Activated T-helper 2 cell treated with anti-CD3 and anti-CD28 coated beads, Interferon-gamma antibody, Interleukin-2, Interleukin-4, amounts not matched to agents 10 μg/mL and 5 μg/mL and 100 μg/mL, durations not matched to agents 14 hours and 24 hours and 36 hours (primary cell): ENCODE measurements at regions of chr6 and their contacts with region 1.

Region 1: DNA sequence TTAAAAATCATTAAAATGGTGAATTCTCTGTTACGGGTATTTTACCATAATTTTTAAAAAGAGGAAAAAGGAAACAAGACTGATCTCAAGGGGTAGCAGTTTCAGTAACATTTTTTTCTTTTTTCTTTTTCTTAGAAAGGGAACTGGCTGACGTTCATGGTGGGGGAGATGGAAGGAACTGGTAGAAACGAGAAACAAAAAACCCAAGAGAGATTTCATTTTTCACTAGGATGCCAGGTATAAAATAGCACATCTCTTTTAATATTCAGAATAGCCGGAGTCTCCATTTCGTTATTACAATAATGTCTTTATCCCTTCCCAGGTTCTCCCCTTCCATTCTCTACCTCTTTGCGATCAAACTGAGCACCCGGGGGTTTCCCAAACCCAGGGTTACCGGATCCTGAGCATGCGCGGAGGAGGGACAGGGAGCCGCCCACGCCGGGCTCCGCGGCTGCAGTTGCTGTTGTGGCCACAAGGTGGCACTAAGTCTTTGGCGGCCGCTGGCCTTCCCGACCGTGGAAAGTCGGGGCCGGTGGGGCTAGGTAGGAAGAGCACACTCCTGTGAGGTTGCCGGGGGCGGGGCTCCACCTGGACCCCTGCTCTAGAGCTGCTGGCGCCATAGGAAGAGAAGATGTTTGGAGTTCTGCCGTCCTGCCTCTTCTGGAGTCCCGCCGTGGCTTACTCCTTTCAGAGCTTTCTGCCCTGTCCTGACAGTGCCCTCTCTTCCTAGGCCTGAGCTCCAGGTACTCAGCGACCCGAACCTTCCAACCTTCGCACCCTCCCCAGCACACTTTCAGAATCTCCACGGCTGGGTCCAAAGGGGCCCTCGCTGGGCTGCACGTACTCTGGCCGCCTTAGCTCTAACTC is 146.8 kb downstream of the SH3BGRL2 start:
- DNase-seq: peak; percentile 80
- H3K4me3 Mint-ChIP-seq: peak overlapping the region; percentile 71
- H3K27ac Mint-ChIP-seq: peak overlapping the region; percentile 13
- H3K4me1 Mint-ChIP-seq: peaks cover 7% of the 10 kb centered on the region
- H3K27me3 Mint-ChIP-seq: peaks cover 10% of the 10 kb centered on the region

Region 2: DNA sequence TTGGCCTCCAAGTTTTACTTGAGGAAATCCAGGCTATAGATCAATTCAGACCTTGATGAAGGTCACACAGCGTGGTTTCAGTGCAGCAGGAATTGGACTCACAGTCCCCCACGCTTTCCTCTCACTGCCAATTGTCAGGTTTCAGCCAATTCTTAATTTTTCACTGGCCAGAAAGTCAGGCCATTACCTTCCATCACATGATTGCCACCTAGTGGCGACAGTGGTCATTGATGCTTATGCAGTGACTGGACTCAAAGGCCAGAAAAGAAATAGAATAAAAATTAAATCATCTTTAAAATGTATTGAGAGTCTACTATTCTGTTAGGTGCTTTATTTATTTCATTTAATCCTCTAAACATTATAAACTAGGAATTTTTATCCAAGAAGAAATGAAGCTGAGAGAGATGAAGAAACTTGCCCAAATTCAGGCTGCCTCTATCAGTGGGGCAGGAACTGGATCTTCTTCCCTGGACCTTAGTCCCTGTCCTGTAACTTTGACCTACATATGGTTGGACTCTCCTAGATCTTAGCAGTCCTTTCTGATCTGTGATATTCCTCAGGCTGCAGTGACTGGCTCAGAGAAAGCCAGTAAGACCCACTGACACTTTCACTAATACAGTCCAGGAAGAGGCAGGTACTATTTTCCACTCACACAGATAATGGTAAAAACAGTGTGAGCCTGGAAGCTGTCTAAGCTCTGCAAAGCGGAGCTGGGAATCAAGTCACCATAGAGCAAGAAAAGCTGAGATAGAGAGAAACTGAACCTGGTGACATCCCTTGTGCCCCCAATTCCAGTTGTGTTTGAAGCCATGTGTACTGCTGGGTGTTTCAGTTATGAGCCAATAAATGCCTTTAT is 36.1 kb after region 1 on chr6:
- intact Hi-C with region 1: loop called (anchors 1 kb)
- DNase-seq: peak; percentile 16
- H3K4me3 Mint-ChIP-seq: no peak overlapping the region
- H3K27ac Mint-ChIP-seq: no peak overlapping the region
- H3K4me1 Mint-ChIP-seq: no peaks in the 10 kb centered on the region
- H3K27me3 Mint-ChIP-seq: peaks cover 6% of the 10 kb centered on the region

Region 3: DNA sequence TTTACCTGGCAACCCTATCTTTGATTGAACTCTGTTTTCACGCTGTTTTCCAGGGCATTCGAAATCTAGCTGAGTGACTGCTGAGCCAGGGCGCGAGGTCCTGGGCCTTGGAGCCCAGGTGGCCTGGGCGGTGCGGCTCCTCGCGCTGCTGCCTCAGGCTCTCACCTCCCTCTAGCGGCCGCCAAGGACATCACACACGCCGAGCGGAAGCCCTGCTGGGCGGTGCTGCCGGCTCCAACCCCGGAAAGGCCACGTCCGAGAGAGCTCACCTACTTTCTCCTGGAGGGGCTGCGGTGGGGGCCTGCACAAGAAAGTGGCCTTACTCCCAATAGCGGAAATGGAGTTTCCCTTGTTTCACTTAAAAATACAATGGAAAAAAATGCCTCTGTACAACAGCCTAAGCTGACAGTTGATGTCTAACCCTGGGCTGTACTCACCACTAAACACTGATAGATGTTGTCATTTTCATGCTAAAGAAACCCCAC is 91.7 kb after region 1 on chr6:
- intact Hi-C with region 1: loop called (anchors 1 kb)
- DNase-seq: peak; percentile 74
- H3K4me3 Mint-ChIP-seq: no peak overlapping the region
- H3K27ac Mint-ChIP-seq: peak overlapping the region; percentile 29
- H3K4me1 Mint-ChIP-seq: peaks cover 10% of the 10 kb centered on the region
- H3K27me3 Mint-ChIP-seq: peaks cover 18% of the 10 kb centered on the region

Region 4: GRCh38 chr6:80094017-80094416 is 316.1 kb after region 1 on chr6:
- intact Hi-C with region 1: loop called (anchors 5 kb)
- DNase-seq: no peak
- H3K4me3 Mint-ChIP-seq: no peak overlapping the region
- H3K27ac Mint-ChIP-seq: no peak overlapping the region
- H3K4me1 Mint-ChIP-seq: peaks cover 6% of the 10 kb centered on the region
- H3K27me3 Mint-ChIP-seq: peaks cover 21% of the 10 kb centered on the region